GM10248 (cell line): ENCODE measurements at regions of chr3 and their contacts with region 1.

Region 1: GRCh38 chr3:98817547-98818041 is 54.5 kb downstream of the ST3GAL6 start:
- DNase-seq: peak; percentile 45
- CTCF ChIP-seq: peak; percentile 55

Region 2: DNA sequence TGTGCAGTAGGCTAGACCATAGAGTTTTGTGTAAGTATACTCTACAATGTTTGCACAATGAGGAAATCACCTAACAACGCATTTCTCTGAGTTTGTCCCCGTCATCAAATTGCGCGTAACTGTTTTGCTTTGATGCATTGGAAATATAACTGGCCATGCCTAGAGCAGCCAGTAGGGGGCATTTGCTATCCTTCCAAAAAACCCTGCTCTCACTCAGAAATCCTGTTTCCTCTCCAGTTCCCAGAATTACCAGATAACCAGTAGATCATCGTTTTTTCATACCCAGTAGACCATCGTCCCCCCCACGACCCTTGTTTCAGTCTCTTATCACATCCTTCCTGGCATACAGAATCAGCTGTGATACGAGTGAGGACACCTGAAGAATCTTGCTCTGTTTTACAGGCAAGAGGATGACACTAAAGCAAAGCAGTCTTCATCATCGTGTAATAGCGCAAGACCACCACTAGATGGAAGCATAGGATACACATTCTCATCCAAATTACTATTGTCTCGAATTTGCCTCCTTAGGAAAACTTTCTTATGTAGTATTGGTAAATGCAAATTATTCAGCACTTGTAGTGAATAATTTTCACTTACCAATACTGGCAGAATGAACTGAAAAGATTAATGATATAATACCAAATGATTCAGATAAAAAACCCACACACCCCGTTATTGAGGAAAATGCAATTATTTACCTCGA is 778.1 kb before region 1 on chr3:
- CTCF ChIA-PET with region 1: interaction called, 13 read pairs
- POLR2A ChIA-PET with region 1: no interaction called
- DNase-seq: peak; percentile 40
- CTCF ChIP-seq: peak; percentile 84

Region 3: GRCh38 chr3:98612587-98612986 is 205.0 kb before region 1 on chr3:
- CTCF ChIA-PET with region 1: interaction called, 14 read pairs
- POLR2A ChIA-PET with region 1: no interaction called
- DNase-seq: no peak
- CTCF ChIP-seq: no peak

Region 4: DNA sequence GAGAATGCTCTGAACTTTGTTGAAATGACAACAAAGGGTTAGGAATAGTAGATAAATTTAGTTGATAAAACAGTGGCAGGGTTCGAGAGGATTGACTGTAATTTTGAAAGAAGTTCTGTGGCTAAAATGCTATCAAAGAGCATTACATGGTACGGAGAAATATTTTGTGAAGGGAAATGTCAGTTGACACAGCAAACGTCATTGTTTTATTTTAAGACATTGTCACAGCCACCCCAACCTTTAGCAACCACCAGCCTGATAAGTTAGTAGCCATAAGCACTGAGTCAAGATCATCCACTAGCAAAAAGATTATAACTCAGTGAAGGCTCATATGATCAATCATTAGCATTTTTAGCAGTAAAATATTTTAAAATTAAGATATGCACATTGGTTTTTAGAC is 63.1 kb before region 1 on chr3:
- CTCF ChIA-PET with region 1: no interaction called
- POLR2A ChIA-PET with region 1: no interaction called
- DNase-seq: no peak
- CTCF ChIP-seq: no peak

Region 5: DNA sequence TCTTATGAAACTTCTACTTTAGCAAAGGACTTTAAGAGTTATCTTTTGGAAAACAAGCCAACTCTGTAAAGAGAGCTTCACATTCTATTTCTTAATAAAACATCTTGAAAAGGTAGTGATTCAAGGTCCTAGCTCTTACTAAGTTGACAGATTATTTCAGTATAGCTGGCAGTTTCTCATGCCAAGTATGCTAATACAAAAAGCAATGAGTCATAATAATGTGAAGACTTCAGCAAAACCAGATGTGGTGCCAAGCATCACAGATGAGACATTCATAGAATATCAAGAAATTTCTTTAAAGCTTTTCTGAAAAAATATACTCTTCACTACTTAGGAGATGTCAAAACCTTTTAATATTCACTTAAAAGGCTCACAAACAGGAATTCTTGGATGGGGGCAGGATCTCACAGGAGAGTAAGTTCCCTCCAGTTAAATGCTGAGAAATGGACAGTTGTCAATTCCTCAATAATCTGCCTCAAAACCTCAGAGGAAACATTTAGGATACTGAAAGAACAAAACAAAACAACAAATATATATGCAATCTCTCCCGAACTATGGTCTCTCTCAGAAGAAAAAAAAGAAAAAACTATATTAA is 38.3 kb after region 1 on chr3:
- CTCF ChIA-PET with region 1: no interaction called
- POLR2A ChIA-PET with region 1: no interaction called
- DNase-seq: no peak
- CTCF ChIP-seq: no peak

Region 6: DNA sequence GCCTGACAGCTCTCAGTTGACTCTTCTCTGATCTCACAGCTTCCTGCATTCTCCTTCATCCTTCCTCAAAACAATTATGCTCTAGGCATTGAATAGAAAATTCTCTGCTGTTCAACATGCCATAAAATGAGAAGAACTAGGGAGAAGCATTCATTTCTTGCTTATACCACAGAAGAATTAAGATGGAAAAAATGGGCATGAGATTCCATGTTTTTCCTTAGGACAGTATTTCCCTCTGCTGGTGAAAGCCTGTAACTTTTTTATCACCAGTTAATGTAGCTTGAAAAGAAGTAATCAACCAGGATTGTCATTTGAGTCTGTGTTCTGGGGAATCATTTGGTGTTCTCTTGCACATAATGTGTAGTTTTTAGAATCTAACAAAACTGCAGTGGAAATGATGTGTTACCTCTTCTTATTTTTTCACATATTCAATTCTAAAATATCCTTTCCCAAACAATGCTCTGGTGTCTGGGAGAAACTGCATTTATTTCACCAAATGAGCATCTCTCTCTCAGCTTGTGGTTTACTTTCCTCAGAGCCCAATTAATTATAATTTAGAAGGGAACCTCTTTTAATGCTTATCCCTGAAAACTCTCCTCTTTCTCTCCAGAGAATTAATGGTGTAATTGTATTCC is 176.7 kb after region 1 on chr3:
- CTCF ChIA-PET with region 1: interaction called, 29 read pairs
- POLR2A ChIA-PET with region 1: no interaction called
- DNase-seq: no peak
- CTCF ChIP-seq: peak; percentile 14

Region 7: DNA sequence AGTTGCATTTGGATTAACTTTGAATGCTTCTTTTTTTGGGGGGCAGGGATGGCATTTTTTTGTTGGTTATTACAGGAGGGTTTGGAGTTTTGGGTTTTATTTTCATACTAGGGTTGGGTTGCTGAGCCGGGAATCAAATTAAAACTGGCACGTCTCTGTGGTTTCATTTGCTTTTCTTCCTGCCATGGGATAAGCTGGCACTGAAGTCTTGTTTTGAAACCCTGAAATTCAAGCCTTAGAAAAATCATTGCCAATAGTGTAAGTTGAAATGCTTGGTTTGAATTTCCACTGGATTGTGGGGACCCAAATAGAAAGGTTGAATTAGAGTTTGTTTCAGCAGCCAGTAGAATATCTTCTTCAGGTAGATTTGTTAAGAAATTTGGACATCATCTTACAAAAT is 277.0 kb after region 1 on chr3:
- CTCF ChIA-PET with region 1: no interaction called
- POLR2A ChIA-PET with region 1: no interaction called
- DNase-seq: no peak
- CTCF ChIP-seq: no peak

Region 8: DNA sequence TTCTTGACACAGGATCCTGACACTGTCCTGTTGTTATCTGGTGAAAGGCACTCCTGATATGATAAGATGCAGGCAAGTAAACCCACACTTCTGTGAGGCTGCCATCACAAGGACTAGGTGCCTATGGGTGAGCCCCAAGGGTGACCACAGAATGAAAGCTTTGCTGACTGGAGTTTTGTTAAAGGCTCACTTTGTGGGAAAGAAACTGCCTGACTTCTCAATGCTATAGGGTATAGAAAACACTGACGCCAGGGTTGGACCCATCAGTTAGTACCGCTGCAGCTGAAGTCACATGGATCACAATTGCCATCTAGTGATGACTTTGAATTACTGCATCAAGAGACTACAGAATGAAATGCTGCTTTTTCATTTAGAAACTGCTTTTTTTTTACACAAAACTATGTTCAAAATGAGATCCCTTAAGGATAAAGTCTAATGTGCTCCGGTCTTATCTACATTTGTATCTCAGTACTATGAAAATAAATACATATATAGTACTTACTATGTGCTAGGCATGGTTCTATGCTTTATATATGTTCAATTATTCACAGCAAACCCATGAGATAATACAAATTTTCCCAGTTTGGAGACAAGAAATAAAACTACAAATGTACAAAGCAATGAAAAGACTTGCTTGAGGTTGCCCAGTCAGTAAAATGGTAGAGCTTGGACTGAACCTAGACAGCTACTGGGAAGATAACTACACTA is 935.8 kb after region 1 on chr3:
- CTCF ChIA-PET with region 1: interaction called, 17 read pairs
- POLR2A ChIA-PET with region 1: no interaction called
- DNase-seq: peak; percentile 34
- CTCF ChIP-seq: peak; percentile 75